PC-9 (cell line): ENCODE measurements at regions of chr6 and their contacts with region 1.

Region 1: DNA sequence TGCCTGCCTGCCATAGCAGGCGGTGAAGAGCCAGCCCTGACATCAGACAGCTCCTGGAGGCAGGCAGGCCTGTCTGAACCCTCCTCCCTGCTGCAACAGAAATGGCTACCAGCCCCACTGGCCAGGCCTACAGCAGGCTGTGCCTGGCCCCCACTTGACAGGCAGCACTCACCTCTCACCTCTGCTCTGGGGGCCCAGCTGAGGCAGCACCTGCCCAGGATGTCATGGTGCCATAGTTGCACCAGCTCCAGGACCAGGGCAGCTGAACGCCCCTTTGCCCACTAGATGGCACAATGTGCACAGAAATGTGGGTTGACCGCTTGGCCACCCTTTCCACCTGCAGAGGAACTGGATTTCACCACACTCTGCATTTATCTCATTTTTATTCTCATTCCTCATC is 30.6 kb downstream of the MRPL14 start:
- DNase-seq: peak; percentile 55 to 73
- H3K4me3 ChIP-seq: no peak overlapping the region
- H3K27ac ChIP-seq: no peak overlapping the region
- H3K4me1 ChIP-seq: no peaks in the 10 kb centered on the region
- H3K27me3 ChIP-seq: no peaks in the 10 kb centered on the region
- CTCF ChIP-seq: peak; percentile 80

Region 2: DNA sequence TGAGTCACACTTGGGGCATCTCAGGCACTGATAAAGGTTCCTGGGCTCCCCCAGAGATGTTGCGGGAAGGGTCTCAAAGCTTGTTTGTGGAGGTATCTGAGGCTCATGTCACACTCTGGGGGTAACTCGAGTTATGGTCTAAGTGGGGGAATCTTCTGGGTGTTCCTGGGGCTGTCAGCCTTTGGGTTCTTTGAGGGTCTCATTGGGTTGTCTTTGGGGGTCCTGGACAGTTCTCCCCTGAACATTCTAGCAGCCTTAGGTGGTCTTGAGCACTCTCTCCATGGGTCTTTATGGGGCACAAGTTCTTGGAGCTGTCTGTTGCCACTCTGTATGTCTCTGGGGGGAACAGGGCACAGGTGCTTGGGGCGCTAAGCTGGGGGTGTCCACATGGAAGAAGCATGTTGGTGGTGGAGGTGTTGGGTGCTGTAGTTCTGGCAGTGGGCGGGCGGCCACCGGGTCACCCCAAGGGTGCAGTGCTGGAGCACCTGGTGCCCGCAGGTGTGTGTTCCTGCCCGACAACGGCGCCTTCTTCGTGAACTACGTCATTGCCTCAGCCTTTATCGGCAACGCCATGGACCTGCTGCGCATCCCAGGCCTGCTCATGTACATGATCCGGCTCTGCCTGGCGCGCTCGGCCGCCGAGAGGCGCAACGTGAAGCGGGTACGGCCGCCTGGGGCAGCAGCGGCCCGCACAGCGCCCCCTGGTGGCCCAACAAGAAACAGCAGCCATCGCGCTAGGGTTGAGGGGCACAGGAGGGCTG is 54.9 kb after region 1 on chr6:
- CTCF ChIA-PET with region 1: no interaction called
- POLR2A ChIA-PET with region 1: no interaction called
- intact Hi-C with region 1: loop called (anchors 1 kb)
- DNase-seq: peak; percentile 41 to 74
- H3K4me3 ChIP-seq: no peak overlapping the region
- H3K27ac ChIP-seq: no peak overlapping the region
- H3K4me1 ChIP-seq: no peaks in the 10 kb centered on the region
- H3K27me3 ChIP-seq: no peaks in the 10 kb centered on the region
- CTCF ChIP-seq: peak; percentile 99

Region 3: GRCh38 chr6:44237813-44238433 is 141.3 kb after region 1 on chr6:
- CTCF ChIA-PET with region 1: interaction called, 8 read pairs
- POLR2A ChIA-PET with region 1: no interaction called
- intact Hi-C with region 1: loop called (anchors 1 kb)
- DNase-seq: peak; percentile 36 to 78
- H3K4me3 ChIP-seq: peak overlapping the region; percentile 63
- H3K27ac ChIP-seq: no peak overlapping the region
- H3K4me1 ChIP-seq: peaks cover 17% of the 10 kb centered on the region
- H3K27me3 ChIP-seq: no peaks in the 10 kb centered on the region
- CTCF ChIP-seq: peak; percentile 98

Region 4: GRCh38 chr6:44338228-44339122 is 241.9 kb after region 1 on chr6:
- CTCF ChIA-PET with region 1: no interaction called
- POLR2A ChIA-PET with region 1: no interaction called
- intact Hi-C with region 1: loop called (anchors 2 kb)
- DNase-seq: peak in 1 of 2 experiments; percentile 56
- H3K4me3 ChIP-seq: no peak overlapping the region
- H3K27ac ChIP-seq: no peak overlapping the region
- H3K4me1 ChIP-seq: peaks cover 7% of the 10 kb centered on the region; the same call in 1 of the 2 replicates
- H3K27me3 ChIP-seq: peaks cover 15% of the 10 kb centered on the region; the same call in 1 of the 2 replicates
- CTCF ChIP-seq: peak; percentile 84